CD14-positive monocyte (primary cell): ENCODE measurements at regions of chr7 and their contacts with region 1.

Region 1: DNA sequence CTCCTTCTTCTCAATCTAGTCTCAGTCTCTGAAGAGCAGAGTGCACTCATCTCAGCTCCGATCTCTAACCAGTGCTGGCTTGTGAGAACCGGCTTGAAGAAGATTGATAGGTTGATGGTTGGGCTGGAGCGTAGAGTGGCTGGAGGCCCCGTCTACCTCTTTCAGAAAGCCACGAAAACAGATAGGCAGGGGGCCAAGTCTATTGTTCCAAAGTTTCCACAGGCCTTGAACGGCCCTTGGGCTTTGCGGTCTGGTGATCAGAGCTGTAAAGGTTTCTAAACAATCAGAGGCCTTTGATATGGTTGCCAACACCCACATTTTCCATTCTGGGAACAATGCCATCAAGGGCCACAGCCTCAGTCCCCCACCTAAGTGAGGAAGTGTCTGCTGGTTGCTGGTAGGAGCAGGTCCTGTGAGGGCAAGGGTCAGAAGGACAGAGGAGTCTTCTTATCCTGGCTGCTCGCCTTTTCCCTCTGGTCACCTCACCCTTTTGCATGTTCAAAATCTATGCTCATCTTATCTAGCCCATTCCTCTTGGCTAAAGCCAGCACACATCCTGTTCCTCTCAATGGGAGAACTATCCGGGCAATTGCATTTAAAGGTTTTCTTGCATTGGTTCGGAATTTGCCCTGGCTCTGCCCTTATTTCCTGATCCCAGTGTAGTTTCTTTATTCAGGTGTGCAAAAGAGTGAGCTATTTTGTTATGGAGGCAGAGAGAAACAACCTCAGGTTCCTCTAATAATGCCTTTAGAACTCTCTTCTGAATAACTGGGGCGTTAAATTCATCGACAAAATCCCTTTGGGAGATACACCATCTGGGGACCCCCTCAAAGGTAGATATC is 70.3 kb upstream of the KMT2E start:
- DNase-seq: peak in 2 of 3 donors; percentile 36 to 55
- H3K4me3 ChIP-seq: peak overlapping the region in 1 of 3 experiments; percentile 31
- H3K4me3 Mint-ChIP-seq: peak overlapping the region; percentile 56 to 60
- H3K27ac ChIP-seq: peak overlapping the region; percentile 93 to 99
- H3K27ac Mint-ChIP-seq: peak overlapping the region; percentile 99 to 100 (median 100)
- H3K4me1 ChIP-seq: peaks cover 49 to 61% of the 10 kb centered on the region in 2 donors
- H3K4me1 Mint-ChIP-seq: peaks cover 56% of the 10 kb centered on the region
- H3K27me3 ChIP-seq: no peaks in the 10 kb centered on the region
- H3K27me3 Mint-ChIP-seq: no peaks in the 10 kb centered on the region
- CTCF ChIP-seq: no peak

Region 2: GRCh38 chr7:104767826-104768536 is 175.7 kb before region 1 on chr7:
- intact Hi-C with region 1: no loop called
- DNase-seq: no peak
- H3K4me3 ChIP-seq: no peak overlapping the region
- H3K4me3 Mint-ChIP-seq: no peak overlapping the region
- H3K27ac ChIP-seq: no peak overlapping the region
- H3K27ac Mint-ChIP-seq: peak overlapping the region in 1 of 7 donors; percentile 66
- H3K4me1 ChIP-seq: no peaks in the 10 kb centered on the region
- H3K4me1 Mint-ChIP-seq: no peaks in the 10 kb centered on the region
- H3K27me3 ChIP-seq: no peaks in the 10 kb centered on the region
- H3K27me3 Mint-ChIP-seq: peaks cover 5 to 7% (median 6%) of the 10 kb centered on the region in 3 donors
- CTCF ChIP-seq: no peak

Region 3: DNA sequence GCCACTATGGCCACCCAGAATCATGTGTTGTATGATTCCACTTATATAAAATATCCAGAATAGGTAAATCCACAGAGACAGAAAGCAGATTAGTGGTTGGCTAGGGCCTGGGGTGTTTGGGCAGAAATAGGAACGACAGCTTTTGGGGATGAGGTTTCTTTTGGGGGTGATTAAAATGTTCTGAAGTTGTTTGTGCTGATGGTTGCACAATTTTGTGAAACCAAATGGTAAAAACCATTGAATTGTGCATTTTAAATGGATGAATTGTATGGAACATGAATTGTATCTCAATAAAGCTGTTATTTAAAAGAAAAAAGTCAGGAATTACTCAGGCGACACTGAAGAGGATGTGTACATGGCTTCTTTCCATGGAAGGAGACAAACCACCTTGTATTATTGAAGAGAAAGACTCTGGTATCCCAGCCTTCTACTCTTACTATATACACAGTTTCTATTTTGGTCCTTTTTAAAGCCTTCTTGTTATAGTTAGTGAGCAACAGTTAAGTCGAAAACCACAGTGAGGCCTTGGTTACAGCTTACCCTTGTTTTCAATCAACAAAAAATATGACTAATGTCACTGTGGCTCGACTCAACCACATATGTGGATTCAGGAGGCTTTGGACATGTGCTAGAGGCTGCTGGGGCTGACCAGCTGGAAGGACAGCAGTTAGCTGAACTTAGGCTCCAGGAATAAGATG is 13.2 kb after region 1 on chr7:
- intact Hi-C with region 1: loop called in 1 of 2 experiments (anchors 1 kb)
- DNase-seq: peak; percentile 74 to 90 (median 89)
- H3K4me3 ChIP-seq: no peak overlapping the region
- H3K4me3 Mint-ChIP-seq: no peak overlapping the region
- H3K27ac ChIP-seq: peak overlapping the region in 1 of 2 donors; percentile 85
- H3K27ac Mint-ChIP-seq: peak overlapping the region; percentile 81 to 98 (median 93)
- H3K4me1 ChIP-seq: peaks cover 42 to 71% of the 10 kb centered on the region in 2 donors
- H3K4me1 Mint-ChIP-seq: peaks cover 63% of the 10 kb centered on the region
- H3K27me3 ChIP-seq: no peaks in the 10 kb centered on the region
- H3K27me3 Mint-ChIP-seq: peaks cover 0 to 2% (median 0%) of the 10 kb centered on the region in 3 donors
- CTCF ChIP-seq: no peak

Region 4: GRCh38 chr7:105325216-105325904 is 381.6 kb after region 1 on chr7:
- intact Hi-C with region 1: no loop called
- DNase-seq: peak; percentile 32 to 55 (median 32)
- H3K4me3 ChIP-seq: no peak overlapping the region
- H3K4me3 Mint-ChIP-seq: no peak overlapping the region
- H3K27ac ChIP-seq: peak overlapping the region in 1 of 2 donors; percentile 39
- H3K27ac Mint-ChIP-seq: peak overlapping the region in 5 of 7 donors; percentile 13 to 63 (median 21)
- H3K4me1 ChIP-seq: peaks cover 16 to 21% of the 10 kb centered on the region in 2 donors
- H3K4me1 Mint-ChIP-seq: peaks cover 24% of the 10 kb centered on the region
- H3K27me3 ChIP-seq: no peaks in the 10 kb centered on the region
- H3K27me3 Mint-ChIP-seq: peaks cover 0 to 4% (median 0%) of the 10 kb centered on the region in 3 donors
- CTCF ChIP-seq: no peak